ENCODE measurements at regions of chr2 and their contacts with region 1.

Region 1: DNA sequence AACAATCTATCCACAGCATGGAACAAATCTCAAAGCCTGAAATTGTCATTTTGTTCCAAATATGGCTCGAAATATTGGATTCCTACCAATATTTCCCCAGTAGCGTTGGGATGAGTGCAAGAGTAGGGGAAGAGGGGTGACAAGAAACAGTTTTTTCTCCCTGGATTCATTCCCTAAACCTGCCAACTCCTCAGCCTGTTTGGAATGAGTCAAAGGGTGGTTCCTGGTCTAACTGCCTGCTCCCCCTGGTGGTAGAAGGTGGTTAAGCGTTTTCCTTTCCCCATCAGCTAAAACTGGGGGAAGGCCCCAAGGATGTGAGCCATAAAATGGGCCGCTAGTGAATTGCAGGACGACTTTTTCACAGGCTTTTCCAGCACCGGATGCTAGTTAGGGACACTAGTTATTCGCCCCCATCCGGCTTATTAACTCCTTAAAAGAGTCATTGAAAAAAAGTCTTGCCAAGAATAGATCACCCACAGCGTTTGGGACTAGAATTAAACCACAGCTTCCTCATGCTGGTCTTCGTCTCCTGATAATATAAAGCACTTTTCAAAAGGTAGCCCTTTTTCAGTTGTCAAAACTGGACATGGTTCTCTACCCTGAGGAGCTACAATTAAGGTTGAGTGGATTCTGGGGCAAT is 72.5 kb downstream of the DHRS9 start:
- DNase-seq: peak; percentile 7
- ATAC-seq: peak; percentile 86
- H3K4me3 ChIP-seq: no peak overlapping the region
- H3K27ac ChIP-seq: no peak overlapping the region
- H3K4me1 ChIP-seq: no peaks in the 10 kb centered on the region
- H3K27me3 ChIP-seq: no peaks in the 10 kb centered on the region
- CTCF ChIP-seq: peak; percentile 85 to 94 (median 86)
- EP300 ChIP-seq: no peak
- POLR2A ChIP-seq: no peak
- RAD21 ChIP-seq: peak; percentile 58

Region 2: DNA sequence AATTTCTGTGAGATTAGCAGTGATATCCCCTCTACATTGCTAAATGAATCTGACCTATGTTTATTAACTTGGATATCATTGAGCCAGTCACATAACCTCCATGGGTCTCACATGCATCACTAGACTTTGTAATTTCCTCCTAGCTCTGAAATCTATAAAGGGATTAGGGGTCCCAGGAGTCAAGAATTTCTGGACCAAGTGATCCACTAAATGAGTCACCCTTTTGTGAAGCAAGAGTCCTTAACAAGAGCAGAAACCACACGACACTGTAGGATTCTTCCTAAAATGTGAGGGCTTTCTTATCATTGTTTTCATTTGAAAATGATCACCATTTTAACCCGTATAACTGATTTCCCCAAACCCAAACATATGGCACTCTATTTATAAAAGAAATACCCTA is 17.9 kb after region 1 on chr2:
- CTCF ChIA-PET with region 1: interaction called, 14 read pairs
- POLR2A ChIA-PET with region 1: no interaction called
- RAD21 ChIA-PET with region 1: interaction called, 3 read pairs
- SMC1A ChIA-PET with region 1: interaction called, 6 read pairs
- in situ Hi-C with region 1: no loop called
- intact Hi-C with region 1: no loop called
- DNase-seq: no peak
- ATAC-seq: no peak
- H3K4me3 ChIP-seq: no peak overlapping the region
- H3K27ac ChIP-seq: no peak overlapping the region
- H3K4me1 ChIP-seq: no peaks in the 10 kb centered on the region
- H3K27me3 ChIP-seq: no peaks in the 10 kb centered on the region
- CTCF ChIP-seq: no peak
- EP300 ChIP-seq: no peak
- POLR2A ChIP-seq: no peak
- RAD21 ChIP-seq: no peak

Region 3: GRCh38 chr2:169397697-169398096 is 255.9 kb after region 1 on chr2:
- CTCF ChIA-PET with region 1: interaction called, 3 read pairs
- POLR2A ChIA-PET with region 1: no interaction called
- RAD21 ChIA-PET with region 1: no interaction called
- SMC1A ChIA-PET with region 1: interaction called, 4 read pairs
- in situ Hi-C with region 1: no loop called
- intact Hi-C with region 1: loop called (anchors 10 kb)
- DNase-seq: no peak
- ATAC-seq: no peak
- H3K4me3 ChIP-seq: no peak overlapping the region
- H3K27ac ChIP-seq: no peak overlapping the region
- H3K4me1 ChIP-seq: no peaks in the 10 kb centered on the region
- H3K27me3 ChIP-seq: no peaks in the 10 kb centered on the region
- CTCF ChIP-seq: peak in 1 of 3 experiments; percentile 33; a peak in 1 of 6 replicates
- EP300 ChIP-seq: no peak
- POLR2A ChIP-seq: no peak
- RAD21 ChIP-seq: peak; percentile 49

Measured in GM12878 (cell line).